Heart right ventricle (tissue), 16 donors: ENCODE measurements at regions of chr7 and their contacts with region 1.

Region 1: GRCh38 chr7:138226001-138226476 is 149.8 kb downstream of the AKR1D1 start:
- DNase-seq: peak in 1 of 2 donors; percentile 62
- ATAC-seq: peak in 7 of 8 donors; percentile 51 to 87 (median 79)
- H3K4me3 ChIP-seq: no peak overlapping the region
- H3K27ac ChIP-seq: peak overlapping the region in 4 of 10 donors; percentile 8 to 36 (median 16)
- H3K4me1 ChIP-seq: peaks cover 0 to 13% (median 8%) of the 10 kb centered on the region in 9 donors
- H3K27me3 ChIP-seq: no peaks in the 10 kb centered on the region
- CTCF ChIP-seq: no peak

Region 2: DNA sequence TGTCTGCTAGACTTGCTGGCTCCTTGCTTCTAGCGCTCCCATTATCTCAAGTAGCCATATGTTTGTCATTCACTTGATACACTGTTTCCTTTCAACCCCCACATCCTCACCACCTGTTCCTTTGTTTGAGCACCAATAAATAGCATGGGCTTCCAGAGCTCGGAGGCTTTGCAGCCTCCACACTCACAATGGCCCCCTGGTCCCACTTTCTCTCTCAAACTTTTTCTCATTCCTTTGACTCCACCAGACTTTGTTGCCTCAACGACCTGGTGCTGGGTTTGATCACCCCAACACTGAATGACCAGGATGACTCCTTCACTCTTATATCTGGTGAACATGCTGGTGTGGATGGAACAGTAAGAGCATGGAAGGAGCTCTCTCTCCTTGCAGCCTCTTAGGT is 119.5 kb after region 1 on chr7:
- intact Hi-C with region 1: loop called in 1 of 10 experiments (anchors 10 kb)
- DNase-seq: no peak
- ATAC-seq: no peak
- H3K4me3 ChIP-seq: no peak overlapping the region
- H3K27ac ChIP-seq: no peak overlapping the region
- H3K4me1 ChIP-seq: peaks cover 0 to 1% (median 0%) of the 10 kb centered on the region in 9 donors
- H3K27me3 ChIP-seq: no peaks in the 10 kb centered on the region
- CTCF ChIP-seq: no peak